ENCODE measurements at regions of chr3 and their contacts with region 1.

Region 1: DNA sequence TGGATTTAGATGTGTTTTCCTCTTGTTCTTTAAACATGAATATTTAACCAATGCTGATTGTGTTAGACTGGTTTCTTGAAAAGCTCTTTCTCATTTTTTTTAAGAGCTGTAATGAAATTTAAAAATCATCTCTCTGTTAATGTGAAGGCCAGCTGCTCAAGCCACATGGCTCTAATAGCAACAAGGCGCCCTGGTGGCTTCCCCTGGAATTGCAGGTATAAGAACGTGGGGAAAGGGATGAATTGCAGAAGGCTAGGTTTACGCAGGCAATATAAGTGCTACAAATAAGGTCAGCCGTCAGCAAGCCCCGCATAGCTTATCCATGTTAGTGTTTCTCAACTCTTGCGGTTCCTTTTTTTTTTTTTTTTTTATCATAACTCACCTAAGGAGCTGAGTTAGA is 108.5 kb downstream of the SAMMSON start:
- DNase-seq: no peak

Region 2: DNA sequence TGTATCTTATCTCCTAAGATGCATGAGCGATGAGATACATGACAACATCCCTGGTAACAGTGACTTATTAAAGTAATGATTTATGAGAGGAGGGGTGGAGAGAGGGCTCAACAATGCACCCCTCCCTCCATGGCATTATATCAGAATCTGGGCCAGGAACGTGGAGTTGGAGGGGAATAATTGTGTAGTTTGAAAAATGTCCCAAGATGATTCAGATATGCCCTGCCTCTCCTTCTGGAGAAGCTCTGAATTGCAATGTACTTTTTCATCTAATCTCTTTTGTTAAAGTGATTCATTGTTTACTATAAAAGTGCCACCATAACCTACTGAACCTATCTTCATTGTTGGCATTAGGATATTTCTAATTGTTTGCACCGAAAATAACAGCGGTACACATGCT is 808.7 kb before region 1 on chr3:
- intact Hi-C with region 1: loop called in 1 of 2 experiments (anchors 5 kb)
- DNase-seq: no peak

Region 3: GRCh38 chr3:70053293-70053692 is 54.8 kb before region 1 on chr3:
- intact Hi-C with region 1: no loop called
- DNase-seq: no peak

Region 4: GRCh38 chr3:70078778-70079177 is 29.3 kb before region 1 on chr3:
- intact Hi-C with region 1: loop called in 1 of 2 experiments (anchors 1 kb)
- DNase-seq: no peak

Region 5: GRCh38 chr3:70249509-70250160 is 141.6 kb after region 1 on chr3:
- intact Hi-C with region 1: no loop called
- DNase-seq: no peak

Measured in posterior vena cava (tissue), 2 donors.